Activated naive CD4-positive, alpha-beta T cell treated with anti-CD3 and anti-CD28 coated beads for 36 hours (primary cell): ENCODE measurements at regions of chr5 and their contacts with region 1.

Region 1: DNA sequence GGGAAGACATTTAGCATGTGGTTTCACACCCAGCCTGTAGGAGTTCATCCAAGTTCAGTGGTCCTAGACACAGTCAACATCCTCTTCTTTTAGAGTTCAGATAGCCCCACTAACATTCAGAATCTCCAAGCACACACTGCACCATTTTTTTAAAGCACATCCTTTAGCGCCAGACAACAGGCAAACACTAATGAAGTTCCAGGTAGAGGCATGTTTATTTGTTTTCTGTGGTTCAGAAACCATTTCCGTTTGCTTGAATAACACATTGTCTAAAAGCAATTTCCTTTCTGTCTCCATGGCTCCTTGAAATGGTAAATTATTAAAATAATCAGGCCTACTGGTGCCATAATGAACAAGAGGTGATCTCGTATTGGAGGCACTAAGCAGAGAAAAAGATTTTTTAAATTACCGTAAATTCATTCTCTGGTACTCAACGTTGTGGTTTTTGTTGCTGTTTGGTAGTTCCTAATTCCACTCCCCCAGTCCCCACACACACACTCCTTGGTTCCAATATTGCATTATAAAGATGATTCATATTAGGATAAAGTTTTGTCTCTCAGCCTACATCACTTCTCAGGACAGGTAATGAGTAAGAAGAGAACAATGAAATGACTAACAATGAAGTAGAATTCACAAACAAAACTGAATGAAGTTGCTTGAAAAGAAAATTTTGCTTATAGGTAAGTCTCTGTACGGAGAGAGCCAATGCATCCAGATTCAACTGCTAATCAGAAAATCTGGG is 153.1 kb downstream of the PCSK1 start:
- DNase-seq: peak; percentile 37
- H3K4me3 Mint-ChIP-seq: no peak overlapping the region
- H3K27ac Mint-ChIP-seq: peak overlapping the region; percentile 31
- H3K4me1 Mint-ChIP-seq: peaks cover 13% of the 10 kb centered on the region
- H3K27me3 Mint-ChIP-seq: peaks cover 26% of the 10 kb centered on the region

Region 2: GRCh38 chr5:95718203-95718602 is 561.8 kb before region 1 on chr5:
- CTCF ChIA-PET with region 1: no interaction called
- intact Hi-C with region 1: loop called (anchors 5 kb)
- DNase-seq: peak; percentile 60
- H3K4me3 Mint-ChIP-seq: no peak overlapping the region
- H3K27ac Mint-ChIP-seq: no peak overlapping the region
- H3K4me1 Mint-ChIP-seq: peaks cover 22% of the 10 kb centered on the region
- H3K27me3 Mint-ChIP-seq: peaks cover 11% of the 10 kb centered on the region

Region 3: GRCh38 chr5:96065577-96066385 is 214.2 kb before region 1 on chr5:
- CTCF ChIA-PET with region 1: no interaction called
- intact Hi-C with region 1: loop called (anchors 2 kb)
- DNase-seq: peak; percentile 37
- H3K4me3 Mint-ChIP-seq: no peak overlapping the region
- H3K27ac Mint-ChIP-seq: peak overlapping the region; percentile 59
- H3K4me1 Mint-ChIP-seq: peaks cover 31% of the 10 kb centered on the region
- H3K27me3 Mint-ChIP-seq: no peaks in the 10 kb centered on the region

Region 4: DNA sequence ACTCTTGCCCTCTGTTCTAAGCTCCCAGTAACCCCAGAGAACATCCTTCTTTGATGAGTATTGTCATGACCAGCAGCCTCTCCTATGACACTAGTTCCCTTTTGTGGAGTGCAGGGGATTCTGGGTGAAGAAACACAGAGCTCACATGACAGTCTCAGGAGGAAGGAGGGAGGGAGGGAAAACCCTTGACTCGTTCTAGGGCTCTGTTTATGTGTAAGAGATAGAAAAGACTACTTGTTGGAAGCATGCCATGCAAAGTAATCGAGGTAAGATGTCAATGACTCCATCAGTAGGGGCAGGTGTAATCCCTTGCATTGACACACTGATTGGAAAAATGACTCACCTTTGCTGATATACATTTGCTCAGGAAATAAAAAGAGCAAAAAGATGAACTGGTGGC is 128.1 kb before region 1 on chr5:
- CTCF ChIA-PET with region 1: no interaction called
- intact Hi-C with region 1: loop called (anchors 1 kb)
- DNase-seq: peak; percentile 63
- H3K4me3 Mint-ChIP-seq: no peak overlapping the region
- H3K27ac Mint-ChIP-seq: peak overlapping the region; percentile 10
- H3K4me1 Mint-ChIP-seq: peaks cover 6% of the 10 kb centered on the region
- H3K27me3 Mint-ChIP-seq: no peaks in the 10 kb centered on the region

Region 5: GRCh38 chr5:96336351-96336985 is 56.5 kb after region 1 on chr5:
- CTCF ChIA-PET with region 1: no interaction called
- intact Hi-C with region 1: loop called (anchors 2 kb)
- DNase-seq: peak; percentile 81
- H3K4me3 Mint-ChIP-seq: no peak overlapping the region
- H3K27ac Mint-ChIP-seq: no peak overlapping the region
- H3K4me1 Mint-ChIP-seq: peaks cover 18% of the 10 kb centered on the region
- H3K27me3 Mint-ChIP-seq: peaks cover 16% of the 10 kb centered on the region